ENCODE measurements at regions of chr11 and their contacts with region 1.

Region 1: DNA sequence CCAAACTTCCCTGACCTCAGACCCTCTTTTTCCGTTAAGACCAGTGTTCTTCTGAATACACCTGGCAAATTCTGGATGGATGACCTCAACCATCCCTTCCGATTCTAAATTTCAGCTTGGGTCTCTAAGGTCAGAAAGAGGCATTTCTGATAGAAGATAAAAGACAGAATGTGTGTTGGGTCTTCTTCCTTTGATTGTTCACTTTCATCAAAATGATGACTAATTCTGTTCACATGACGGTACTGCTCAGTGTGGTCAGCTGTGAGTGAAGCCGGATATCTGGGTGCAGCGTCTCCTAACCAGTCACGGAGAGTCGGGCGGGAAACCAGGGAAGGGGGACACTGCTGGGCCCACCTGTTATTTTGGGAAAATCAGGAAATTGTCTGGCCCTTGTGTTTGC is 151.6 kb upstream of the NAV2 start:
- DNase-seq: peak; percentile 24
- ATAC-seq: no peak
- H3K4me3 ChIP-seq: no peak overlapping the region
- H3K27ac ChIP-seq: no peak overlapping the region
- H3K4me1 ChIP-seq: no peaks in the 10 kb centered on the region
- H3K27me3 ChIP-seq: peaks cover 21% of the 10 kb centered on the region
- CTCF ChIP-seq: no peak
- POLR2A ChIP-seq: no peak
- RAD21 ChIP-seq: no peak

Region 2: DNA sequence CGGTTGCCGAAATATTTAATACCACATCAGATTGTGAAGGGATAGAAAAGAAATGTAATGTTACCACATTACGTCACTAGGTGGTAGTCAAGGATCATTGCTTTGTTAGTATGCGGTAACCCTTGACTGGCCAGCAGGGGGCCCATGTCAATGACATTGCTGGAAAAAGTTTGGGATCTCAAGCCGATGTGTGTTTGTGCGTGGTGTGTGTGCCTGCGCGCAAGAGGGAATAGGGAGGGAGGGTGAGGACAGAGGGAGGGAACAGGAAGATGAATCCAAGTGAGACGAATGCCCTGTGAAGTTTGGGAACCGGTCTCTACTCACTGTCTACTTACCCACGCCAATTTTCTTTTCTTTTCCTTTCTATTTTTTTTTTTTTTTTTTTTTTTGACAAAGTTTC is 489.8 kb before region 1 on chr11:
- CTCF ChIA-PET with region 1: interaction called, 5 read pairs
- POLR2A ChIA-PET with region 1: no interaction called
- dilution Hi-C with region 1: no loop called
- in situ Hi-C with region 1: loop called (anchors 5 kb)
- intact Hi-C with region 1: no loop called
- DNase-seq: peak; percentile 82
- ATAC-seq: peak; percentile 99
- H3K4me3 ChIP-seq: peak overlapping the region; percentile 26; the same call in 1 of the 2 replicates
- H3K27ac ChIP-seq: no peak overlapping the region
- H3K4me1 ChIP-seq: no peaks in the 10 kb centered on the region
- H3K27me3 ChIP-seq: peaks cover 18% of the 10 kb centered on the region
- CTCF ChIP-seq: peak; percentile 100
- POLR2A ChIP-seq: no peak
- RAD21 ChIP-seq: peak; percentile 89

Region 3: DNA sequence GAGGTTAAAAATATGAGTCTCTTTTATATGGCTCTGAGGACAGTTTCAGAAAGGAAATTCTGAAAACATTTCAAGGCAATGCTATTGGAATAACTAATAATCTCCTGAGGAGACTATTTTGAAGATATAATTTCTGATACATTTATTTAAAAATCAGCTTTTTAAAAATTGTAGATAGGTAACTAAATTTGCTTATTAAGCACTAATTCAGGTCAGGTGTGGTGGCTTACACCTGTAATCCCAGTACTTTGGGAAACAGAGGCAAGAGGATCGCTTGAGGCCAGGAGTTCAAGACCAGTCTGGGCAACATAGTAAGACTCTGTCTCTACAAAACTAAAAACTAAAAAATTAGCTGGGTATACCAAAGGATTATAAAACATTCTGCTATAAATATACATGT is 427.0 kb before region 1 on chr11:
- CTCF ChIA-PET with region 1: no interaction called
- POLR2A ChIA-PET with region 1: no interaction called
- dilution Hi-C with region 1: no loop called
- in situ Hi-C with region 1: no loop called
- intact Hi-C with region 1: no loop called
- DNase-seq: no peak
- ATAC-seq: no peak
- H3K4me3 ChIP-seq: no peak overlapping the region
- H3K27ac ChIP-seq: no peak overlapping the region
- H3K4me1 ChIP-seq: no peaks in the 10 kb centered on the region
- H3K27me3 ChIP-seq: no peaks in the 10 kb centered on the region
- CTCF ChIP-seq: no peak
- POLR2A ChIP-seq: no peak
- RAD21 ChIP-seq: no peak

Region 4: GRCh38 chr11:19712281-19713220 is 151.5 kb after region 1 on chr11 and contains the start of gene NAV2:
- CTCF ChIA-PET with region 1: interaction called, 4 read pairs
- POLR2A ChIA-PET with region 1: no interaction called
- dilution Hi-C with region 1: no loop called
- in situ Hi-C with region 1: no loop called
- intact Hi-C with region 1: loop called (anchors 1 kb)
- DNase-seq: peak; percentile 91
- ATAC-seq: peak; percentile 91
- H3K4me3 ChIP-seq: peak within 1 kb of the TSS; percentile 63
- H3K27ac ChIP-seq: peak within 1 kb of the TSS; percentile 84
- H3K4me1 ChIP-seq: peaks cover 25% of the 10 kb centered on the region
- H3K27me3 ChIP-seq: no peaks in the 10 kb centered on the region
- CTCF ChIP-seq: 0 out of 2 replicates have a peak, but pooled peaks have one; percentile 1
- POLR2A ChIP-seq: peak; percentile 95
- RAD21 ChIP-seq: peak; percentile 25; the same call in 1 of the 2 replicates
- total RNA-seq, gene NAV2: 4.5 and 4.7 TPM in 2 replicates

Region 5: GRCh38 chr11:19742588-19743292 is 181.7 kb after region 1 on chr11:
- CTCF ChIA-PET with region 1: interaction called, 23 read pairs
- POLR2A ChIA-PET with region 1: no interaction called
- dilution Hi-C with region 1: no loop called
- in situ Hi-C with region 1: loop called (anchors 5 kb)
- intact Hi-C with region 1: loop called (anchors 1 kb)
- DNase-seq: peak; percentile 79
- ATAC-seq: peak; percentile 92
- H3K4me3 ChIP-seq: no peak overlapping the region
- H3K27ac ChIP-seq: no peak overlapping the region
- H3K4me1 ChIP-seq: no peaks in the 10 kb centered on the region
- H3K27me3 ChIP-seq: no peaks in the 10 kb centered on the region
- CTCF ChIP-seq: peak; percentile 89
- POLR2A ChIP-seq: no peak
- RAD21 ChIP-seq: peak; percentile 97

Region 6: GRCh38 chr11:19800162-19800561 is 239.2 kb after region 1 on chr11:
- CTCF ChIA-PET with region 1: no interaction called
- POLR2A ChIA-PET with region 1: no interaction called
- dilution Hi-C with region 1: no loop called
- in situ Hi-C with region 1: no loop called
- intact Hi-C with region 1: loop called (anchors 1 kb)
- DNase-seq: no peak
- ATAC-seq: 0 out of 2 replicates have a peak, but pooled peaks have one; percentile 30
- H3K4me3 ChIP-seq: no peak overlapping the region
- H3K27ac ChIP-seq: no peak overlapping the region
- H3K4me1 ChIP-seq: peaks cover 4% of the 10 kb centered on the region; the same call in 1 of the 2 replicates
- H3K27me3 ChIP-seq: no peaks in the 10 kb centered on the region
- CTCF ChIP-seq: peak; percentile 35
- POLR2A ChIP-seq: no peak
- RAD21 ChIP-seq: peak; percentile 46

Region 7: DNA sequence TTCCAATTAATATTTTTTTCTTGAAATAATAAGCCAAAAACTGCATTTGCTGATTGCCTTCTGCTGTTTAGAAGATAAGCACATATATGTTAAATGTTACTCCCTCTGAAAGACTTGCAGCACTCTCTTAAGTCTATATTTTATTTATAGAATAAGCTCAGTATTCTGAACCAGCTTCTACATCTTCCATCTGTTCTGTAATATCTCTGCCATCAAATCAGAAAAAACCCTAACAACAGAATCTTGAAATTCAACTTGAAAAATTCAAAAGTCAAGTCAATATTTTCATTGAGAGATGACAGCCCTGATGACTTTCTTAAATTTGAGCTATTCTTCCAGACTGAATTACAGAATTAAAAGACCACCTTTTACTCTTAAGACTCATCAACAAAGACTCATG is 1356.3 kb after region 1 on chr11:
- CTCF ChIA-PET with region 1: no interaction called
- POLR2A ChIA-PET with region 1: no interaction called
- dilution Hi-C with region 1: no loop called
- in situ Hi-C with region 1: no loop called
- intact Hi-C with region 1: no loop called
- DNase-seq: no peak
- ATAC-seq: no peak
- H3K4me3 ChIP-seq: no peak overlapping the region
- H3K27ac ChIP-seq: no peak overlapping the region
- H3K4me1 ChIP-seq: no peaks in the 10 kb centered on the region
- H3K27me3 ChIP-seq: no peaks in the 10 kb centered on the region
- CTCF ChIP-seq: no peak
- POLR2A ChIP-seq: no peak
- RAD21 ChIP-seq: no peak

Measured in IMR-90 (cell line).